Esophagus muscularis mucosa (tissue), 4 donors: ENCODE measurements at regions of chr12 and their contacts with region 1.

Region 1: DNA sequence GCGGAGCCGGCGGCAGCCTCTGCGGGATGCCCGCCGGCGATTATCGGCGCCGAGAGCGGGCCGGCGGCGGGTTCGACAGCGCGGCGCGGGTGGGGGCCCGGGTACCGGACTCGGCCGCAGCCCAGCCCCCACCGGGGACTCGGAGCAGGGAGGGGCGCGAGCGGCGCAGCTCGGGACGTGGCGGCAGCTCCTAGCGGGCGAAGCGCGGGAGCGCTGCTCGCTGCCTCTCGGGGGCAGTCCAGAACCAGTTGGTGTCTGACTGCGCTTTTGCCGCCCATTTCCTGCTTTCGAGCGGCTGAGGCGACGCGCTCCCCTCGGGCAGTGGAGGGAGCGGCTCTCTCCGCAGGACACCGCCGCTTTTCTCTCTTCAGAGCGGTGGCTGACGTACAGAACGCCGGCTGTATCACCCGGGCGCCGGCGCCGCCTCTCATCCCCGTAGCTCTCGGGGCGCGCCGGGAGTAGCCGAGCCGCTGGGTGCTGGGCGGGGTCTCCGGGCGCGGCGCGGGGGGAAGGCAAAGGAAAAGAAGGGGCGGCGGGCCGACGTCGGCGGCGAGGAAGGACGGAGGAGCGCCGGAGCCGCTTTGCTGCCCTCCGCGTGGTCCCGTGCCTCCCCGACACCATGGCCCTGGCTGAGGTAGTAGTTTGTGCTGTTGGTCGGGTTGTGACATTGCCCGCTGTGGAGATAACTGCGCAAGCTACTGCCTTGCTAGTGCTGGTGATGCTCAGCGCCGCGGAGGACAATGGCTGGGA is 136.6 kb downstream of the MON2 start:
- DNase-seq: peak; percentile 93
- H3K4me3 ChIP-seq: peak overlapping the region; percentile 73 to 94 (median 88)
- H3K27ac ChIP-seq: peak overlapping the region; percentile 97 to 100 (median 100)
- H3K4me1 ChIP-seq: peaks cover 15 to 31% (median 28%) of the 10 kb centered on the region in 4 donors
- H3K27me3 ChIP-seq: peaks cover 0 to 6% (median 0%) of the 10 kb centered on the region in 4 donors
- CTCF ChIP-seq: peak; percentile 49 to 71 (median 53)
- EP300 ChIP-seq: no peak
- POLR2A ChIP-seq: peak; percentile 47

Region 2: GRCh38 chr12:62205346-62205745 is 397.9 kb before region 1 on chr12:
- intact Hi-C with region 1: no loop called
- DNase-seq: no peak
- H3K4me3 ChIP-seq: no peak overlapping the region
- H3K27ac ChIP-seq: no peak overlapping the region
- H3K4me1 ChIP-seq: peaks cover 0 to 2% (median 0%) of the 10 kb centered on the region in 4 donors
- H3K27me3 ChIP-seq: no peaks in the 10 kb centered on the region
- CTCF ChIP-seq: no peak
- EP300 ChIP-seq: no peak
- POLR2A ChIP-seq: no peak

Region 3: GRCh38 chr12:62466594-62467491 is 136.4 kb before region 1 on chr12 and contains the start of gene MON2:
- intact Hi-C with region 1: loop called (anchors 10 kb)
- DNase-seq: peak; percentile 96
- H3K4me3 ChIP-seq: peak within 1 kb of the TSS; percentile 83 to 87 (median 84)
- H3K27ac ChIP-seq: peak within 1 kb of the TSS; percentile 85 to 94 (median 92)
- H3K4me1 ChIP-seq: peaks cover 31 to 43% (median 37%) of the 10 kb centered on the region in 4 donors
- H3K27me3 ChIP-seq: no peaks in the 10 kb centered on the region
- CTCF ChIP-seq: peak in 1 of 3 experiments; percentile 9
- EP300 ChIP-seq: no peak
- POLR2A ChIP-seq: no peak
- total RNA-seq, gene MON2: 21.5 to 47.3 (median 30.8) TPM

Region 4: DNA sequence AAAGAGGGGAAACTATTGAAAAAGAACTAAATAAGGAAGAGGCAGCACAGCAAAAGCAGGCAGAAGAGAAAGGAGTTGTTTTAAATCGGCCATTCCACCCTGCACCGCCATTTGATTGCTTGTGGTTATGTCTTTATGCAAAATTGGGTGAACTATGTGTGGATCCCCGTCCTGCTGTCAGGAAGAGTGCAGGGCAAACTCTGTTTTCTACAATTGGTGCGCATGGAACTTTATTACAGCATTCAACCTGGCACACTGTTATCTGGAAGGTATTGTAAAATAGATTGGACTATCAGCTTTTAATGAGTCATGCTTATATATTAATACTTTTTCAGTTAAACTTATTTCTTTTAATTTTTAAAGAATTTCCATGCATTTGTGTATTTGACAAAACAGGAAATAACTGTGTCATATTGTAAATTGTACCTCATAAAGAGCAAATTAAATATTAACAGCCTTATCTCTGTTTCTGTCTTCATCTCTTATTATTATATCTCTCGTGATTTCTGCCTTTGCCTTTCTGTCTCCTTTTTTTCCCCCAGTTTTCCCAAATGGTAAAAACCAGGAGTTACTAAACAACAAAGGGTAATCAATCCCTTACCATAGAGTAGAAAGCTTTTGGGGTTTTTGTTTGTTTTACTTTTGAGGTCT is 50.2 kb before region 1 on chr12:
- intact Hi-C with region 1: no loop called
- DNase-seq: no peak
- H3K4me3 ChIP-seq: no peak overlapping the region
- H3K27ac ChIP-seq: no peak overlapping the region
- H3K4me1 ChIP-seq: no peaks in the 10 kb centered on the region
- H3K27me3 ChIP-seq: no peaks in the 10 kb centered on the region
- CTCF ChIP-seq: no peak
- EP300 ChIP-seq: no peak
- POLR2A ChIP-seq: no peak

Region 5: GRCh38 chr12:62631471-62632410 is 28.5 kb after region 1 on chr12:
- intact Hi-C with region 1: loop called (anchors 2 kb)
- DNase-seq: peak; percentile 92
- H3K4me3 ChIP-seq: peak overlapping the region; percentile 61 to 71 (median 64)
- H3K27ac ChIP-seq: peak overlapping the region; percentile 69 to 78 (median 73)
- H3K4me1 ChIP-seq: peaks cover 9 to 20% (median 18%) of the 10 kb centered on the region in 4 donors
- H3K27me3 ChIP-seq: no peaks in the 10 kb centered on the region
- CTCF ChIP-seq: peak; percentile 33 to 39 (median 39)
- EP300 ChIP-seq: no peak
- POLR2A ChIP-seq: no peak

Region 6: DNA sequence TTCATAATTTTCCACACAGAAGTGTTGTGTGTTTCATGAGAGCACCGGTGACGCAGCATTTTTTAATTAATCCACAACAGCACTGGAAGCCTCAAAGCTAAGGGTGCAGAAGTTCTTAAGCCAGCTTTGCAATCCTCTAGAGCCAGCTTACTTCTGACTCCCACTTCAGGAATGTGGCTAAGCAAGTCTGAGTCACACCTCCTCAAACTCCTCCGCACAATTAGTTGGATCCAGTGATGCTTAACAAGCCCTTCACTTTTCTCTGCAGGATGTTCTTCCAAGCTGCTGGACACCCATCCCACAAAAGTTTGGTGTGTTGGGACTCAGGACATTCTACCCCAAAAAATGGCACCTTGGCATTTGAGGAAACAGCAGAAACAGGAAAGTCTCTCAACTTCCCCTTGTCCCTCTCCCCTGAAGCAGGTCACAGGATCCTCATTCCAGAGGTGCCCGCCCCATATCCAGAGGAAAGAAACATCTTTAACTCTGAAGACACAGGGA is 121.8 kb after region 1 on chr12:
- intact Hi-C with region 1: loop called (anchors 5 kb)
- DNase-seq: no peak
- H3K4me3 ChIP-seq: no peak overlapping the region
- H3K27ac ChIP-seq: peak overlapping the region in 3 of 4 donors; percentile 3 to 29 (median 25)
- H3K4me1 ChIP-seq: peaks cover 17 to 39% (median 23%) of the 10 kb centered on the region in 4 donors
- H3K27me3 ChIP-seq: no peaks in the 10 kb centered on the region
- CTCF ChIP-seq: no peak
- EP300 ChIP-seq: no peak
- POLR2A ChIP-seq: no peak

Region 7: GRCh38 chr12:62793256-62794217 is 190.3 kb after region 1 on chr12:
- intact Hi-C with region 1: loop called (anchors 2 kb)
- DNase-seq: peak; percentile 97
- H3K4me3 ChIP-seq: no peak overlapping the region
- H3K27ac ChIP-seq: peak overlapping the region in 1 of 4 donors; percentile 9
- H3K4me1 ChIP-seq: peaks cover 8 to 19% (median 9%) of the 10 kb centered on the region in 4 donors
- H3K27me3 ChIP-seq: no peaks in the 10 kb centered on the region
- CTCF ChIP-seq: peak; percentile 96 to 98 (median 96)
- EP300 ChIP-seq: no peak
- POLR2A ChIP-seq: no peak